AG04450 (cell line): ENCODE measurements at regions of chr17 and their contacts with region 1.

Region 1: GRCh38 chr17:47615766-47616424 is 33.8 kb upstream of the KPNB1 start:
- DNase-seq: no peak
- H3K4me3 ChIP-seq: no peak overlapping the region
- H3K27ac ChIP-seq: no peak overlapping the region
- H3K27me3 ChIP-seq: no peaks in the 10 kb centered on the region
- CTCF ChIP-seq: peak; percentile 67

Region 2: GRCh38 chr17:47604598-47604927 is 11.3 kb before region 1 on chr17:
- CTCF ChIA-PET with region 1: interaction called, 15 read pairs
- POLR2A ChIA-PET with region 1: no interaction called
- DNase-seq: peak; percentile 41
- H3K4me3 ChIP-seq: no peak overlapping the region
- H3K27ac ChIP-seq: peak overlapping the region; percentile 22
- H3K27me3 ChIP-seq: no peaks in the 10 kb centered on the region
- CTCF ChIP-seq: no peak

Region 3: DNA sequence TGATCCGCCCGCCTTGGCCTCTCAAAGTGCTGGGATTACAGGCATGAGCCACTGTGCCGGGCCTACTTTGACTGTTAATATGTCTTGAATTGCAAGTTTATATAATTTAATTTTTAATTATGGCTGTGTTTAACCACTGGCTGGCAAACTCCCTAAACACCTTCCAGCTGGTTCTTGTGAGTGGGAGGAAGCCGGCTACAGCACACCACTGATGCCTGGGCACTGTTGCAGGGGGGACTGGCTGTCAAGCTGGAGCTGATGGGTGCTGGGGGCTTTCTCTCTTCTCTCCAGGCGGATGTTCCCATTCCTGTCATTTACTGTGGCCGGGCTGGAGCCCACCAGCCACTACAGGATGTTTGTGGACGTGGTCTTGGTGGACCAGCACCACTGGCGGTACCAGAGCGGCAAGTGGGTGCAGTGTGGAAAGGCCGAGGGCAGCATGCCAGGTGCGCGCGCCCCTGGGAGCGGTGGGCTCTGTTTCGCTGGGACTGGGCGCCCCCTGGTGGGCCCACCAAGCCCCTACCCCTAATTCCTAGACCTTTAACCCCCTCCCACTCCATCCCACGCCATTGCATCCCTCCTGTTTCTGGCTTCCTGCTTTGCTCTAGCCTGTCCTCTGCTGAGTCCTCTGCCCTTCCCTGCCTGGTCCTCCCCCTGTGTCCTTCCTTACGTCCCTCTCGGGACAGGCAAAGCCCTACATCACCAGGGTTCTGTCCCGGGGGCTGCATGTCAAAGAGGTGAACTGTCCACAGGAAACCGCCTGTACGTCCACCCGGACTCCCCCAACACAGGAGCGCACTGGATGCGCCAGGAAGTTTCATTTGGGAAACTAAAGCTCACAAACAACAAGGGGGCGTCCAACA is 126.7 kb after region 1 on chr17:
- CTCF ChIA-PET with region 1: no interaction called
- POLR2A ChIA-PET with region 1: no interaction called
- DNase-seq: no peak
- H3K4me3 ChIP-seq: no peak overlapping the region
- H3K27ac ChIP-seq: no peak overlapping the region
- H3K27me3 ChIP-seq: peaks cover 46% of the 10 kb centered on the region
- CTCF ChIP-seq: peak; percentile 32

Region 4: GRCh38 chr17:47862621-47863440 is 246.9 kb after region 1 on chr17:
- CTCF ChIA-PET with region 1: no interaction called
- POLR2A ChIA-PET with region 1: no interaction called
- DNase-seq: peak; percentile 68
- H3K4me3 ChIP-seq: no peak overlapping the region
- H3K27ac ChIP-seq: peak overlapping the region; percentile 54
- H3K27me3 ChIP-seq: peaks cover 3% of the 10 kb centered on the region
- CTCF ChIP-seq: no peak